K562 (cell line): ENCODE measurements at regions of chr11 and their contacts with region 1.

Region 1: DNA sequence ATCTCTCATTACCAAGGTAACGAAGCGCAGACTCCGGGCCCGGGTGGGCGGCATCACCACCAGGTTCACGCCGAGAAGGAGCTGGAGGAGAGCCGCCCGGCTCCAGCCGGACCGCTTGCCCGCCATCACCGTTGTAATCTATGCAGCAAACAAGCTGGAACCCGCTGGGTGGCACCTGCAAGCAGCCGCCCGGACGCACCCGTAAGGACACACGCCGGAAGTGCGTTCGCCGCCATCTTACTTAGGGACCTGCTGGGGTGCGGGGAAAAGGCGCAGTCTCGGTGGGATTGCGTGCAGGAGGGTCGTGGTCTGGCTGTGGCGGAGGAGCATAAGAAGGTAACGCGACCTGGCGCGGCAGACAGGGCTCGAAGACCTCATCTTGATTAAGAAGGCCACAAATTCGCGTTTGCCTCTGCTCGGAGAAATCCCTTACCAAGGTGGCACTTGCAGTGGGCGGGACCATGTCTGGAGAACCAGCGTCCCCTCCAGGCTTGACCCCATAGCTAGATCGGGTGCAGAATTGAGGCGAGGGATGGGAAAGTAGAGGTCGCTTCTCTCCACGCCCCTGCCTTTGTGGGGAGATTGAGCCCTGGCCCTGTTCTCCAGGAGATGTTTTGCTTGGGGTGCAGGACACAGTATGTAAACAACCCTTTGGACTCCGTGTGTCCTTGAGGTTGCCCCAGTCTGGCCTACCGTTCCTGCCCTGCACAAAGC is at the start of gene ACP2:
- DNase-seq: peak; percentile 82 to 94 (median 84)
- ATAC-seq: peak; percentile 93
- H3K4me3 ChIP-seq: peak within 1 kb of the TSS; percentile 97
- H3K27ac ChIP-seq: peak within 1 kb of the TSS; percentile 96
- H3K4me1 ChIP-seq: peaks cover 13 to 19% of the 10 kb centered on the region in 2 experiments; a peak in 4 of 5 replicates
- H3K27me3 ChIP-seq: no peaks in the 10 kb centered on the region
- CTCF ChIP-seq: peak; percentile 53 to 66 (median 55); a peak in 5 of 6 replicates
- EP300 ChIP-seq: 0 out of 2 replicates have a peak, but pooled peaks have one; percentile 17
- POLR2A ChIP-seq: peak; percentile 94
- RAD21 ChIP-seq: peak; percentile 24
- polyA plus RNA-seq, gene ACP2: 1.9 to 2.2 TPM

Region 2: DNA sequence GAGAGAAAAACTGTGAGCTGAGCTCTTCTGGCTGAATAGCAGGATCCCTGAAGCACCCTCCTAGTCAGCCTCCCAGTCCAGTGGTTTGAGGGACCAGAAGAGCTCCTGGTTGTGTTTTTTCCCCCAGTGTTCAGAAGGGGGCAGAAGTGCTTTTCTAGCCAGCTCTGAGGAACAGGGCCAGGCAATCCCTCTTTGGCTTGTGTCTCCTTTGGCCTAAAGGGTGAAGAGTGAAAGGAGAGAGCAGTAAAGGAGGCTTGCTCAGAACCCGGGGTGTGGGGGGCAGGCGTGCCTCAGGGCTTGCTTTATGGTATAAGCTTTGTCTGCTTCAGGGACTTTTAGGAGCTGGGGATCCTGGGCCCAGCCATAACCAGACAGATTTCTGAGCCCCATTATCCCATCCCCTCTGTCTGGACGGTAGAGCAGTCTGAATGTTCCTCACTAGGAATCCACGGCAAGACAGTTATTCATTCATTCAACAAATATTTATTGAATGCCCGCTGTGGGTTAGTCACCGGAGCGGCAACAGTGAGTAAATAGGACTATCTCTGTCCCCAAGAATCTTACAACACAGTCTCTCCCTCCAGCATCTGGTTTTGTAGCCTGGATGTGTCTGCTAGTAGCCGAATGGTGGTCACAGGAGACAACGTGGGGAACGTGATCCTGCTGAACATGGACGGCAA is 14.7 kb before region 1 on chr11:
- CTCF ChIA-PET with region 1: no interaction called
- POLR2A ChIA-PET with region 1: interaction called, 110 read pairs
- in situ Hi-C with region 1: no loop called
- intact Hi-C with region 1: no loop called
- DNase-seq: peak in 3 of 4 experiments; percentile 15 to 57 (median 38)
- ATAC-seq: peak; percentile 84
- H3K4me3 ChIP-seq: no peak overlapping the region
- H3K27ac ChIP-seq: no peak overlapping the region
- H3K4me1 ChIP-seq: peaks cover 4 to 5% of the 10 kb centered on the region in 2 experiments; a peak in 2 of 5 replicates
- H3K27me3 ChIP-seq: no peaks in the 10 kb centered on the region
- CTCF ChIP-seq: peak; percentile 44 to 65 (median 64)
- EP300 ChIP-seq: no peak
- POLR2A ChIP-seq: no peak
- RAD21 ChIP-seq: peak; percentile 55 to 66

Region 3: GRCh38 chr11:47259178-47259977 is 10.6 kb after region 1 on chr11:
- CTCF ChIA-PET with region 1: no interaction called
- POLR2A ChIA-PET with region 1: interaction called, 31 read pairs
- in situ Hi-C with region 1: no loop called
- intact Hi-C with region 1: no loop called
- DNase-seq: peak in 2 of 4 experiments; percentile 67 to 68
- ATAC-seq: peak; percentile 82
- H3K4me3 ChIP-seq: no peak overlapping the region
- H3K27ac ChIP-seq: no peak overlapping the region
- H3K4me1 ChIP-seq: peaks cover 45 to 46% of the 10 kb centered on the region in 2 experiments
- H3K27me3 ChIP-seq: no peaks in the 10 kb centered on the region
- CTCF ChIP-seq: peak; percentile 74 to 83 (median 81)
- EP300 ChIP-seq: no peak
- POLR2A ChIP-seq: no peak
- RAD21 ChIP-seq: peak; percentile 28 to 65; a peak in 3 of 4 replicates

Region 4: DNA sequence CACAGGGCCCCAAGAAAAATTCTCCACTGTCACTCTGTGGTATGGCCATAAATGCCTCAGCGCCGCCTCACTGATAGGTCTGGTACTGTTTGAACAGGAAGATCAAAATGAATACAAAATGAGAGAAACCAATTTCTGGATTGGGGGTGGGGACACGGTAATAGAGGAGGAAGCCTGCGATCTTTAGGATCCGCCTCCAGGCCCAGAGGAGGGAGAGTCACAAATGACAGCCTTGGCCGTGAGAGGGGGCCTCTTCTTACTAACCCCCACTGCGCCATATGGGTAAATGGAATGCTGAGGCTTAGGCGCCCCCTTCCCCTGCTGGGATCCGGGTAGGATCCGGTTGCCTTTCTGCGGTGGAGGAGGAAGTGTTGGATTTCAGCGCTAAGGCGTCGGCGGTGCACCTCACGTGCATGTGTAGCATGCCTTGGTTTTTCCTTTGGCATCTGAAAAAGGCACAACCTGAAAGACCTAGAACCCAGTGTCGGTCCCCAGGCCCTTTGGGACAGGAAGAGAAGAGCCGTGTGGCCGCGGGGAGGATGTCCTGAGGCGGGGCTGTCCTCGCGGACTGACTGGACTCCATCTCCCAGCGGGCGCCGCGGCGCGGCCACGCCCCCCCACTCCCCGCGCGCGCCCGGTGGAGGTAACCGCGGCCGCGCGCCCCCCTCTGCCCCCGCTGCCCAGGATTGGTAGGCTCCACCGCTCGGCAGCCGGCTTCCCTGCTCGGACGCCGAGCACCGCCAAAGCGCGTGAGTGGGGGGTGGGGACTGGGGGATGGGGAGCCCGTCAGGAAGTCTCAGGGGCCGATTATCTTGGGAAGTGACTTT is 20.4 kb after region 1 on chr11:
- CTCF ChIA-PET with region 1: no interaction called
- POLR2A ChIA-PET with region 1: interaction called, 7 read pairs
- in situ Hi-C with region 1: no loop called
- intact Hi-C with region 1: loop called (anchors 1 kb)
- DNase-seq: peak; percentile 90 to 93 (median 91)
- ATAC-seq: peak; percentile 70
- H3K4me3 ChIP-seq: peak overlapping the region; percentile 85
- H3K27ac ChIP-seq: peak overlapping the region; percentile 91
- H3K4me1 ChIP-seq: peaks cover 56 to 57% of the 10 kb centered on the region in 2 experiments
- H3K27me3 ChIP-seq: no peaks in the 10 kb centered on the region
- CTCF ChIP-seq: peak; percentile 31 to 48 (median 39); a peak in 4 of 6 replicates
- EP300 ChIP-seq: no peak
- POLR2A ChIP-seq: peak; percentile 82
- RAD21 ChIP-seq: peak in 1 of 2 experiments; percentile 31; a peak in 1 of 4 replicates